ENCODE measurements at regions of chr11 and their contacts with region 1.

Region 1: GRCh38 chr11:12963792-12964536 is 45.2 kb upstream of the RASSF10 start:
- DNase-seq: peak; percentile 7
- ATAC-seq: peak; percentile 97
- H3K4me3 ChIP-seq: no peak overlapping the region
- H3K27ac ChIP-seq: no peak overlapping the region
- H3K4me1 ChIP-seq: no peaks in the 10 kb centered on the region
- H3K27me3 ChIP-seq: no peaks in the 10 kb centered on the region
- CTCF ChIP-seq: peak; percentile 68 to 86 (median 75)
- EP300 ChIP-seq: no peak
- POLR2A ChIP-seq: no peak
- RAD21 ChIP-seq: peak; percentile 75

Region 2: GRCh38 chr11:13114566-13115379 is 150.8 kb after region 1 on chr11:
- CTCF ChIA-PET with region 1: interaction called, 50 read pairs
- POLR2A ChIA-PET with region 1: no interaction called
- RAD21 ChIA-PET with region 1: interaction called, 13 read pairs
- SMC1A ChIA-PET with region 1: interaction called, 52 read pairs
- in situ Hi-C with region 1: no loop called
- intact Hi-C with region 1: loop called (anchors 2 kb)
- DNase-seq: no peak
- ATAC-seq: peak; percentile 43
- H3K4me3 ChIP-seq: no peak overlapping the region
- H3K27ac ChIP-seq: no peak overlapping the region
- H3K4me1 ChIP-seq: no peaks in the 10 kb centered on the region
- H3K27me3 ChIP-seq: no peaks in the 10 kb centered on the region
- CTCF ChIP-seq: peak in 2 of 3 experiments; percentile 14 to 45; a peak in 2 of 6 replicates
- EP300 ChIP-seq: no peak
- POLR2A ChIP-seq: no peak
- RAD21 ChIP-seq: no peak

Region 3: GRCh38 chr11:13152736-13153533 is 189.0 kb after region 1 on chr11:
- CTCF ChIA-PET with region 1: interaction called, 201 read pairs
- POLR2A ChIA-PET with region 1: no interaction called
- RAD21 ChIA-PET with region 1: interaction called, 84 read pairs
- SMC1A ChIA-PET with region 1: interaction called, 106 read pairs
- in situ Hi-C with region 1: no loop called
- intact Hi-C with region 1: loop called (anchors 1 kb)
- DNase-seq: no peak
- ATAC-seq: peak; percentile 50; the same call in 2 of the 3 replicates
- H3K4me3 ChIP-seq: no peak overlapping the region
- H3K27ac ChIP-seq: no peak overlapping the region
- H3K4me1 ChIP-seq: no peaks in the 10 kb centered on the region
- H3K27me3 ChIP-seq: no peaks in the 10 kb centered on the region
- CTCF ChIP-seq: peak in 1 of 3 experiments; percentile 54; a peak in 2 of 6 replicates
- EP300 ChIP-seq: no peak
- POLR2A ChIP-seq: no peak
- RAD21 ChIP-seq: no peak

Region 4: DNA sequence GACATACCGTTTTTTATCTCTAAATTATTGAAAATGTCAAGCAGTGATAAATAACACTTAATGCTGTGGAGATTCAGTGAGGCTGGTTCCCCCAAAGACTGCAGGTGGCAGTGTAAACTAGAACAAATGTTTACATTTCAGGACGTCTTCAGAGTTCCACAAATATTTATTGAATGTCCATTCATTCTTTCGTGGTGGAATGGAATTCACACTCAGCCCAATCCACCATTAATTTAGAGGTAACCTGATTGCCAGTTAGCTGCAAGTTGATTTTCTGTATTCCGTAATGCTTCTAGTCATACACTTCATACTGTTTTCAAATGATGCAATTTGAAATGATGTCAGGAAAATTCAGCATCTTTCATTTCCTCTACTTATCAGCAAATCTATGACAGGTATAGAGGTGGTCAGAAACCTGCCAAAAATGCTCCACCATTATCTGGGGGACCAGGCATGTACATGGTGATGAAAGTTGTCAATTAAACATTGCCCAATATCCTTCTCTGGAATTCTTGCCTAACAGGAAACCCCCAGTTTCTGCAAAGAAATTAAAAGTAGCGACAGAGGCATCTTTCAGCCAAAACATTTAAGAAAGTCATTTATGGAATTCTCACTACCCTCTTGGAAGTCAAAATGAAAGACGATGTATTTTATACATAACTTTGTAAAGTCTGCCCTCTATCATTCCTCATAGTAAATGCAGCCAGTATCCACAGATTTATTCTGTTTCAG is 219.3 kb after region 1 on chr11:
- CTCF ChIA-PET with region 1: interaction called, 49 read pairs
- POLR2A ChIA-PET with region 1: no interaction called
- RAD21 ChIA-PET with region 1: interaction called, 32 read pairs
- SMC1A ChIA-PET with region 1: interaction called, 11 read pairs
- in situ Hi-C with region 1: loop called (anchors 25 kb)
- intact Hi-C with region 1: loop called (anchors 1 kb)
- DNase-seq: no peak
- ATAC-seq: peak; percentile 81
- H3K4me3 ChIP-seq: no peak overlapping the region
- H3K27ac ChIP-seq: no peak overlapping the region
- H3K4me1 ChIP-seq: peaks cover 4% of the 10 kb centered on the region
- H3K27me3 ChIP-seq: no peaks in the 10 kb centered on the region
- CTCF ChIP-seq: peak; percentile 49 to 60 (median 55)
- EP300 ChIP-seq: no peak
- POLR2A ChIP-seq: no peak
- RAD21 ChIP-seq: peak; percentile 59

Region 5: GRCh38 chr11:13343931-13344717 is 380.2 kb after region 1 on chr11:
- CTCF ChIA-PET with region 1: interaction called, 3 read pairs
- POLR2A ChIA-PET with region 1: no interaction called
- RAD21 ChIA-PET with region 1: interaction called, 6 read pairs
- SMC1A ChIA-PET with region 1: no interaction called
- in situ Hi-C with region 1: loop called (anchors 5 kb)
- intact Hi-C with region 1: loop called (anchors 2 kb)
- DNase-seq: no peak
- ATAC-seq: peak; percentile 69
- H3K4me3 ChIP-seq: no peak overlapping the region
- H3K27ac ChIP-seq: no peak overlapping the region
- H3K4me1 ChIP-seq: peaks cover 40% of the 10 kb centered on the region
- H3K27me3 ChIP-seq: no peaks in the 10 kb centered on the region
- CTCF ChIP-seq: peak; percentile 79 to 84 (median 80)
- EP300 ChIP-seq: no peak
- POLR2A ChIP-seq: no peak
- RAD21 ChIP-seq: peak; percentile 84

Region 6: GRCh38 chr11:13462901-13463778 is 499.2 kb after region 1 on chr11 and contains the start of gene BTBD10:
- CTCF ChIA-PET with region 1: interaction called, 3 read pairs
- POLR2A ChIA-PET with region 1: no interaction called
- RAD21 ChIA-PET with region 1: no interaction called
- SMC1A ChIA-PET with region 1: no interaction called
- in situ Hi-C with region 1: no loop called
- intact Hi-C with region 1: loop called (anchors 10 kb)
- DNase-seq: peak; percentile 89
- ATAC-seq: peak; percentile 97
- H3K4me3 ChIP-seq: peak within 1 kb of the TSS; percentile 90
- H3K27ac ChIP-seq: peak within 1 kb of the TSS; percentile 88
- H3K4me1 ChIP-seq: no peaks in the 10 kb centered on the region
- H3K27me3 ChIP-seq: no peaks in the 10 kb centered on the region
- CTCF ChIP-seq: no peak
- EP300 ChIP-seq: no peak
- POLR2A ChIP-seq: peak; percentile 99
- RAD21 ChIP-seq: no peak
- polyA plus RNA-seq, gene BTBD10: 25.4 to 25.6 TPM